K562 (cell line): ENCODE measurements at regions of chr3 and their contacts with region 1.

Region 1: DNA sequence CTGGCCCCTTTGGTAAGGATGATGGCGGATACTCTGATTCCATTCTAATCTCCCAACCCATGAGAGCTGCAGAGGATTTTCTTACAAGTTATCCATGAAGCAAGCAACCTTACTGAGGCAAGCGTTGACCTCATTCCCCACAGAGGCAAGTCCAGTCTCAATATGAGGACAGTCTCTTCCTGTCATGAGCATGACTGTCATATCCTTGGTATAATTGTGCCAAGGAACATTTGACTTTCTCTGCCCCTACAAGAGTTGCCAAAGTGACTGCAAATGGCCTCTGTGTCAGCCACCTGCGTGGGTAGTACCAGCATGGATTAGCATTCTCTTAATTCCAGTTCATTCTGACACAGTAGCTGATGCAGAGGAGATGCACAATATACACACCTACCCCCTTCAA is 71.2 kb upstream of the TMEM158 start:
- DNase-seq: no peak
- ATAC-seq: no peak
- H3K4me3 ChIP-seq: no peak overlapping the region
- H3K27ac ChIP-seq: no peak overlapping the region
- H3K4me1 ChIP-seq: no peaks in the 10 kb centered on the region
- H3K27me3 ChIP-seq: peaks cover 19 to 25% of the 10 kb centered on the region in 2 experiments
- CTCF ChIP-seq: no peak
- EP300 ChIP-seq: no peak
- POLR2A ChIP-seq: no peak
- RAD21 ChIP-seq: no peak

Region 2: GRCh38 chr3:45283471-45283870 is 13.9 kb before region 1 on chr3:
- CTCF ChIA-PET with region 1: no interaction called
- POLR2A ChIA-PET with region 1: interaction called, 11 read pairs
- in situ Hi-C with region 1: no loop called
- intact Hi-C with region 1: no loop called
- DNase-seq: no peak
- ATAC-seq: no peak
- H3K4me3 ChIP-seq: no peak overlapping the region
- H3K27ac ChIP-seq: no peak overlapping the region
- H3K4me1 ChIP-seq: no peaks in the 10 kb centered on the region
- H3K27me3 ChIP-seq: peaks cover 0 to 4% of the 10 kb centered on the region in 2 experiments; a peak in 3 of 5 replicates
- CTCF ChIP-seq: no peak
- EP300 ChIP-seq: no peak
- POLR2A ChIP-seq: no peak
- RAD21 ChIP-seq: no peak